Mammary epithelial cell (primary cell): ENCODE measurements at regions of chr2 and their contacts with region 1.

Region 1: DNA sequence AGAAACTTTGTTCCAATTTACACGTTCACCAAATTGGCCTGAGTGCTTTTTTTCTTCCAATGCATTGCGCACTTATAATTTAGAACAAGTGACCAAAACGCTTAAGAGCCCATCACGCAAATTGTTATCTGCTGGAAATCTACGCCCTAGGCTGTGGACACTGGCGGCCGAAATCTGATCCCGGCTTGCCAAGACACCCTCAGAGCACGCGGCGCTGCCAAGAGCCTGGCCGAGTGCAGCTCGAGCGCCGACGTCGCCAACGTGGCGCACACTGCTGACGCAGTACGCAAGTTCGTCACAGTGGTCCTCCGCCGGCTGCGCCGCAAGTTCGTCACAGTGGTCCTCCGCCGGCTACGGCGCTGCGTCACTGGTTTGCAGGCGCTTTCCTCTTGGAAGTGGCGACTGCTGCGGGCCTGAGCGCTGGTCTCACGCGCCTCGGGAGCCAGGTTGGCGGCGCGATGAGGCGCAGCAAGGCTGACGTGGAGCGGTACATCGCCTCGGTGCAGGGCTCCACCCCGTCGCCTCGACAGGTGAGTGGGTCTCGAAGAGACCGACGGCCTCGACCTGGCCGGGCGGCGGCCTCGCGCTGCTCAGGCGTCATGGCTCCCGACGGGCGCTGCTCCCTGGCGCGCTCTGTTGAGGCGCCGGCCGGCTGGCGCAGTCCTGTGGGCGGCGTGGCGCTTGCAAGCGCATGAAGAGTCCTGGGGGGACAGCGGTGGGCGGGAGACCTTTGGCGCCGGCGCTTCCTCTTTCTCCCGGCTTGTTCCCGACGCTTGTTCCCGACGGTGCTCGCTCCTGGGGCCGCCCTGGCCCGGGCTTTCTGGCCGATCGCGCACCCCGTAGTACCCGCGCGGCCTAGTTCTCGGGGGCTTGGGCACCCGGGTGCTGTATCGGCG is at the start of gene RANBP2:
- DNase-seq: peak; percentile 96
- H3K4me3 ChIP-seq: peak within 1 kb of the TSS; percentile 54 to 97 (median 76)
- H3K27ac ChIP-seq: peak within 1 kb of the TSS; percentile 84
- H3K4me1 ChIP-seq: peaks cover 7% of the 10 kb centered on the region
- H3K27me3 ChIP-seq: no peaks in the 10 kb centered on the region
- CTCF ChIP-seq: no peak
- total RNA-seq, gene RANBP2: 56.1 to 89.9 TPM

Region 2: DNA sequence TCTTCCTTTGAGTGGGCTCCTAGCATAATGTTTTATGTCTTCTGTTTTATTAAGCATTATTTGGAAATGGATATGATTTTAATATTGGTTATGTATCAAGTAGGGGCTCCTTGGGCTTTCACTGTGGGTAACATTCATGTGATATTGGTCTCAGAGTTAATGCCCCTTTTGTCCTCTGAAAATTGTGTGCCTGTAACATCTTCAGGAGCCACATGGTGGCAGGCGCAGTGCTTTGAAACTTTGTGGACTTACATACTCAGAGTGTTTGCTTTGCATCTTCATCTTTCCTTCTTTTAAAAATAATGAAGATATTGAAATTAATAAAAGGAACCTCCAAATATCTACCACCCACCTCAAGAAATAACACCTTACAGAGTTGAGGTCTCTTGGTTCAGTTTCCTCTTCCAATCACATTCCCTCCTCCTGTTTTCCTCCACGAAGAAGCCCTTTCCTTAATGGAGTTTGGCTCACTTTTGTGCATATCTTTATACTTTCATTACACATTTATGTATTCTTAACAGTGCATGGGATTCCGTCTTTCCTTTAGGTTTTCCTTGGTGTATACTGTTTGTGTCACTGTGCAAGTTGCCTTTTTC is 111.6 kb before region 1 on chr2:
- CTCF ChIA-PET with region 1: no interaction called
- dilution Hi-C with region 1: no loop called
- in situ Hi-C with region 1: no loop called
- intact Hi-C with region 1: loop called (anchors 1 kb)
- DNase-seq: no peak
- H3K4me3 ChIP-seq: no peak overlapping the region
- H3K27ac ChIP-seq: no peak overlapping the region
- H3K4me1 ChIP-seq: peaks cover 18% of the 10 kb centered on the region
- H3K27me3 ChIP-seq: no peaks in the 10 kb centered on the region
- CTCF ChIP-seq: peak; percentile 50 to 68